Dendritic cell treated with granulocyte-macrophage colony-stimulating factor and Interleukin-4, amounts not matched to agents 40 ng/mL and 50 ng/mL, for 4 days (primary cell): ENCODE measurements at regions of chr19 and their contacts with region 1.

Region 1: DNA sequence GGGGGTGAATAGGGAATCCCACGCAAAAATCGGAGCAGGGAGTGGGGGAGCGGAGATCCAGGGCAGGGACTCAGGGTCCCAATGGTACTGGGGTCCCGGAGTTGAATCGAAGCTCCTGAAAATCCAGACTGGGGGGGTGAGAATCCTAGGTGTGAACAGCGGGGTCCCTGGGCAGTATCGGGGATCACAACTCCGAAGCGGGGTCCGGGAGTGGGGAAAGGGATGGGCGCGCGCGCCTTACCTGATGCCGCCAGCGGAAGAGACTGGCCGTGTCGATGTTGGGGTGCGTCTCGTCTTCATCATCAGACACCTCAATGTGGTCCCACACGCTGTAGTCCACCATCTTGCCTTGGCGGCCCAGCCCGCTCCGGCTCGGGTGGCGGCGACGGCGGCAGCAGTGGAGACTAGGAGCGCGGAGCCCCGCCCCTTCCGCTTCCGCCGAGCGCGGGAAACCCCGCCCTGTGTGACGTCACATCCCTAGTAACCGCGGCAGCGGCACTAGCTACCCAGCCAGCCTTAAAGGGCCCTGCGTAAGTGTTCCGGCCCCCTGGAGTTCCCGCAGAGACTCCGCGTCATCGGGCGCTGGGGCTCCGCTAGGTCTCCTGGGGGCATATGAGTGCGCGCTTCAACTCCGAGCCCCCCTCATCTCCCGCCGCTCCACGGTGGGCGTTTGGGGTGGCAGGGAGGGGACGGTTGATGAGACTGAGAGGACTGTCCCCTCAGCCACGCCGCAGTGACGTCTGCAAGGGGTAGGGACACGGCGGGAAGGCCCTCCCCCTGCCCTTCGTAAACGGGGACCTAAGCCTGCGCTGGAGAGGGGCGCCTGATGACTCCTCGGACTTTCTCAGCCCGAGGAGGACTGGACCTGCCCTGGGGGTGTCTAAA is at the start of gene CDC37:
- H3K4me3 Mint-ChIP-seq: peak within 1 kb of the TSS; percentile 96
- H3K27ac Mint-ChIP-seq: peak within 1 kb of the TSS; percentile 93
- H3K4me1 Mint-ChIP-seq: peaks cover 78% of the 10 kb centered on the region
- H3K27me3 Mint-ChIP-seq: no peaks in the 10 kb centered on the region

Region 2: DNA sequence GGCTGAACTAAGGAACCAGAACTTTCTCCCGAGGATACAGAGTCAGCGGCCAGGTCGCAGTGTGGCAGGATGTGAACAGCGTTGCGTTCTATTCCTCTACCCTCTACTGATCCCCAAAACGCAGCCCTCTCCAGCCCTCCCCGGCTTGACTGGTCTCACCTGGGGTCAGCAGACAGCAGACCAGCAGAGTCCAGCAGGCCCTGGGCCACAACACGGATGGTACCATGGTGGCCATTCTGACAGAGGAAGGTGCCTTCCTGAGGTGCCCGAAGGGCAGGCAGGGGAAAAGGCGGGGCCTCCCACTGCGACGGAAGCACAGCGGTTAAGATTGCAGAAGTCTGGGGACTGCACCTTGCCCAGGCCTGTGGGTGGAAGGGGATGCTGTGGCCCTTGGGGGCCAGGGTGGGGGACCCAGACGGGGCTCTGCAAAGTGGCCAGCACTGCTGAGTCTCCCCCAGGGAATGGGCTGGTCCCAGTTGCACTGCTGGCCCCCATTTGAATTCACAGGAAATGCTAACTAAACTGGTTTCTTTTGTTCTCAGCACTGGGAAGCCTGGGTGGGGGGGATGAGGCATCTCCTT is 63.9 kb before region 1 on chr19 and contains the start of gene ICAM3:
- intact Hi-C with region 1: no loop called
- H3K4me3 Mint-ChIP-seq: peak within 1 kb of the TSS; percentile 63
- H3K27ac Mint-ChIP-seq: peak within 1 kb of the TSS; percentile 41
- H3K4me1 Mint-ChIP-seq: peaks cover 47% of the 10 kb centered on the region
- H3K27me3 Mint-ChIP-seq: no peaks in the 10 kb centered on the region

Region 3: GRCh38 chr19:10353793-10354391 is 49.5 kb before region 1 on chr19:
- intact Hi-C with region 1: no loop called
- H3K4me3 Mint-ChIP-seq: no peak overlapping the region
- H3K27ac Mint-ChIP-seq: no peak overlapping the region
- H3K4me1 Mint-ChIP-seq: peaks cover 5% of the 10 kb centered on the region
- H3K27me3 Mint-ChIP-seq: no peaks in the 10 kb centered on the region

Region 4: DNA sequence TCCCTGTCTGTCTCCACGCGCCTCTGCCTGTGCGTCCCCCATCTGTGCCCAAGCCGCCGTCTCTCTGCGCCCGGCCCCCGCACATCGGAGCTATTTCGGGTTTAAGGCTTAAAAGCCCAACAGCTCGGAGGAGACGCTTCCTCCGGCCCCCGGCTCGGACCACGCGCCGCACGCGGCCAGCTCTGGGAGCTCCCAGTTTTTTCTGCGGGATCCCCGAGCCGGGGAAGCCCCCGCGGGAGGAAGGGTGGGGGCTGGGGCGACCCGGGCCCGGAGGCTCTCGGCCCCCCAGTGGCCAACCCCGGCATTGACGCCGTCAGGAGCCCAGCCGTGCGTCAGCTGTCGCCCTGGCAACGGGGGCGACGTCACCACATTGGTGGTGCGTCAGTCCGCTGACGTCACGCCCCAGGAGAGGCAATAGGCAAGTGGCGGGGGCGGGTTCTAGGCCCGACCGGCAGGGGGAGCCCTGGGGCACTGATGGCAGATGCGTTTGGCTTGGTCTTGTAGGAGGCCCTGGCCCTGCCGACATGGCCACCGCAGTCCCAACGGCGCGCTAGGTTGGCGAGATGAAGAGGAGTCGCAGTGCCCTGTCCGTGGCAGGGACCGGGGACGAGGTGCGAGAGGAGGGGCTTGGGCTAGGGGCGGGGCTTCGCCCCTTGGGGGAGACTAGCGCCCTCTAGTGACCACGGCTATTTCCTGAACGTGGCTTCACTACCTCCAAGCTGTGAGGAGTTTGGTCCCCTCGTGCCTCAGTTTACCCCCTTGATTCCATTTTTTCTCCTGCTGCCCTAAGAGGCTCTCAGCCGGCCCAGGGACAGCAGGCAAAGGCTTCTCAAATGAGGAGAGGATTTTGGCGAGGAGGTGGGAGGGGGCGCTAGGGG is 13.2 kb after region 1 on chr19:
- intact Hi-C with region 1: loop called (anchors 1 kb)
- H3K4me3 Mint-ChIP-seq: peak overlapping the region; percentile 83
- H3K27ac Mint-ChIP-seq: peak overlapping the region; percentile 91
- H3K4me1 Mint-ChIP-seq: peaks cover 62% of the 10 kb centered on the region
- H3K27me3 Mint-ChIP-seq: peaks cover 47% of the 10 kb centered on the region

Region 5: DNA sequence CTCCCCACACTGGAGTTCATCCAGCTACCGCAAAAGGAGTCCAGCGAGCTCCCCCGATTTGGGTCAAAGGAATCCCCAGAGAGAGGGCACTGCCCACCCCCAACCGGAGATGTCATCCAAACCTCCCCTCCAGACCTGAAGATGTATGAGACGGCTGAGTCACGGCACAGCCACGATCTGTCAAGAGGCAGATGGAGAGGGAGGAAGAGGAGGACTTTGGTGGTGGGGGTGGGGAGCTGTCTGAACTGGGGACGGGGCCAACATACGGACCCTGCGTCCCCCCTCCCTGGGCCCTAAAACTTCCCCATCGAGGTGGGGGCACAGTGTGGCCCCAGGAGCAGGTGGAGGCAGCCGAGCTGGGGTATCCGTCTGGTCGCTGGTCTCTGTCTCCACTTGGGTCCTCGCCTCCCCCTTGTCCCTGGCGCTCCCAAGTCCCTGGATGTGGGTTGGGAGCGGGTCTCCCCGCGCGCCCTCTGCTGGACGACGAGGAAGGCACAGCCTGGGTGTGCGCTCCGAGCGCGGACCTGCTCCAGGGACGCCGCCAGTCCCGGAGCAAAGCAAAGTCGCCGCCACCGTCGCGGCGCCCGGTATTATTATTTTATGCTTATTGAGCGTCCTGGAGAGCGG is 20.7 kb after region 1 on chr19:
- intact Hi-C with region 1: loop called (anchors 2 kb)
- H3K4me3 Mint-ChIP-seq: peak overlapping the region; percentile 78
- H3K27ac Mint-ChIP-seq: peak overlapping the region; percentile 92
- H3K4me1 Mint-ChIP-seq: peaks cover 95% of the 10 kb centered on the region
- H3K27me3 Mint-ChIP-seq: peaks cover 36% of the 10 kb centered on the region

Region 6: DNA sequence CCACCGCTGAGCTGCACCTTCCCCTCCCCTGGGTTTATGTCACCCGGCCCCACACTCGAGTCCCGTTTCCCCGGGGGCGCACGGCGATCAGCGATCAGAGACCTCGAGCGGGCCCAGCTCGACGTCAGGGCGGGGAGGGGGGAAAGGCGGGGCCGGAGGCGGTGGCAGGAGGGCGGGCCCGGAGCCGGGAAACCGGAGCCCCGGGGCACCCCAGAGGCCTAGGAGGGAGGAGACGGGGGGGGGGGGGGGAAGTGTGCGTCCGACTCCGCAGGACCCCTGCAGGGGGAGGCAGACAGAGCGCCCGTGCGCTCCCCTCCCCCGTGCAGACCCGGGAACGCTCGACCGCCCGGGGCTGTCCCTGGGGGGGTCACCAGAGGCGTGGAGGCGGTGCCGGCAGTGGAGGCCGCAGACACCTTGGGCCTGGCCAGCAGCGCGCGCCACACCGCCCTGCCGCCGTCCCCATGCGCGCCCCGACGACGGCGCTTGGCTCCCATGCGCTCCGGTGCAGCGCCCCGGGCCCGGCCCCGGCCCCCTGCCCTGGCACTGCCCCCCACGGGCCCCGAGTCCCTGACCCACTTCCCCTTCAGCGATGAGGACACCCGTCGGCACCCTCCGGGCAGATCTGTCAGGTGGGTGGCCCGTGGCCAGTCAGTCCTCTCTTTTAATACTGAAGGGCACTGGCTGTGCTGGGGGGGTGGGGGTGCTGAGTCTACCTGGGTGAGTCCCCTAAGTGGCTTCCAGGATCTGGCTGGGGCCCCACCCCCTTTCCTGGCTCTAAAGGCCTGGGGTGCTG is 28.8 kb after region 1 on chr19:
- intact Hi-C with region 1: loop called (anchors 1 kb)
- H3K4me3 Mint-ChIP-seq: peak overlapping the region; percentile 98
- H3K27ac Mint-ChIP-seq: peak overlapping the region; percentile 92
- H3K4me1 Mint-ChIP-seq: peaks cover 77% of the 10 kb centered on the region
- H3K27me3 Mint-ChIP-seq: peaks cover 10% of the 10 kb centered on the region